Activated naive CD4-positive, alpha-beta T cell treated with anti-CD3 and anti-CD28 coated beads, Interleukin-2, amount 10 ng/mL, durations not matched to agents 7 days and 5 days (primary cell): ENCODE measurements at regions of chr22 and their contacts with region 1.

Region 1: GRCh38 chr22:46563381-46564083 is 26.1 kb upstream of the CELSR1 start:
- DNase-seq: peak; percentile 86
- H3K4me3 Mint-ChIP-seq: peak overlapping the region; percentile 17
- H3K27ac Mint-ChIP-seq: peak overlapping the region; percentile 52
- H3K4me1 Mint-ChIP-seq: peaks cover 16% of the 10 kb centered on the region
- H3K27me3 Mint-ChIP-seq: peaks cover 6% of the 10 kb centered on the region

Region 2: DNA sequence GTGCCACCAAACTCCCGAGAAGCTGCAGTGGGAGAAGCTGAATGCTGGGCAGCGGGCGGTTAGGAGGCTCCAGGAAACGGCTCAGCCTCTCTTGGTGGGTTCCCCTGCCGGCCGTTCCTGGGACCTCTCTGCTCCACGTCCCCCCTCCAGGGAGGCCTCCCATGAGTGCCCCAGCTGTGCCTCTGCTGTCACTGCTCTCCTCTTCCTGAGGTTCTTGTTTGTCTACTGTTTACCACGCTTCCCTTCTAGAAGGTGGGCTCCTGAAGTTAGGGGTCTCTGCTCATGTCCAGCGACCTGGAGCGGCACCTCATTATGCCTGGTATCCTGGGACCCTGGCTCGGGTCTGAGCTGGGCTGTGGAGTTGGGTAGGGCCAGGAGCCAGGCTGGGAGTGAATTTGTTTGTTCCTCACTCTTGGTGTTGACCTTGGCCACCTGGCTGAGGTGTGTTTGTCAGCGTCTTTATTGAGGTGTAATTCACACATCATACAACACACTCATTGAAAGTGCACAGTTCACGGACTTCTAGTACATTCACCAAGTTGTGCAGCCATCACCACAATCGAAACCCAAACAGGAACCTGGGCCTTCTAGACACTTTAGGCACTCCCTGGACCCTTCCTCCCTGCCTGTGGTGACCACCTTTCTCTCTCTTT is 18.9 kb after region 1 on chr22:
- CTCF ChIA-PET with region 1: no interaction called
- DNase-seq: no peak
- H3K4me3 Mint-ChIP-seq: no peak overlapping the region
- H3K27ac Mint-ChIP-seq: no peak overlapping the region
- H3K4me1 Mint-ChIP-seq: peaks cover 69% of the 10 kb centered on the region
- H3K27me3 Mint-ChIP-seq: peaks cover 11% of the 10 kb centered on the region

Region 3: GRCh38 chr22:46596819-46597218 is 33.3 kb after region 1 on chr22:
- CTCF ChIA-PET with region 1: no interaction called
- DNase-seq: no peak
- H3K4me3 Mint-ChIP-seq: no peak overlapping the region
- H3K27ac Mint-ChIP-seq: no peak overlapping the region
- H3K4me1 Mint-ChIP-seq: peaks cover 35% of the 10 kb centered on the region
- H3K27me3 Mint-ChIP-seq: peaks cover 23% of the 10 kb centered on the region

Region 4: GRCh38 chr22:46613606-46614021 is 50.1 kb after region 1 on chr22:
- CTCF ChIA-PET with region 1: interaction called, 10 read pairs
- DNase-seq: peak; percentile 46
- H3K4me3 Mint-ChIP-seq: peak overlapping the region; percentile 85
- H3K27ac Mint-ChIP-seq: peak overlapping the region; percentile 98
- H3K4me1 Mint-ChIP-seq: peaks cover 46% of the 10 kb centered on the region
- H3K27me3 Mint-ChIP-seq: peaks cover 11% of the 10 kb centered on the region

Region 5: DNA sequence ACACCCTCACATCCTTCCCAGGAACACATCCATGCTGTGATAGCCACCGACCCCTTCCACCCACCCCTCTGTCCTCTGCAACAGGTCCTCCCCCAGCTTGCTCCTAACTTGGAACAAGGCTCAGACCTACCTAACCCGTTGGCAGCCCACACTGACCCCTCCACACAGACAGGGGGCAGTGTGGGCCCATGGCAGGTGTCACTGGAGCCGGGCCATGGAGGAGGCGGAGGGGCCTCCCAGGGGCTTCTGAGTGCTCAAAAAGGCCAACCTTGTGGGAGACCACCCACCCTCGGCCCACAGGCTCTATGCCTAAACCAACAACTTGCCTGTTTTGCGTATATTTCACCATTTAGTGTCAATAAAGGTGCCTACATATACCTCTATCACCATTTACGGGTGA is 117.5 kb after region 1 on chr22:
- CTCF ChIA-PET with region 1: interaction called, 14 read pairs
- DNase-seq: peak; percentile 44
- H3K4me3 Mint-ChIP-seq: no peak overlapping the region
- H3K27ac Mint-ChIP-seq: no peak overlapping the region
- H3K4me1 Mint-ChIP-seq: peaks cover 23% of the 10 kb centered on the region
- H3K27me3 Mint-ChIP-seq: no peaks in the 10 kb centered on the region

Region 6: GRCh38 chr22:46798366-46799350 is 235.1 kb after region 1 on chr22:
- CTCF ChIA-PET with region 1: interaction called, 23 read pairs
- DNase-seq: peak; percentile 79
- H3K4me3 Mint-ChIP-seq: no peak overlapping the region
- H3K27ac Mint-ChIP-seq: peak overlapping the region; percentile 78
- H3K4me1 Mint-ChIP-seq: peaks cover 21% of the 10 kb centered on the region
- H3K27me3 Mint-ChIP-seq: no peaks in the 10 kb centered on the region